Mammary epithelial cell (primary cell): ENCODE measurements at regions of chr9 and their contacts with region 1.

Region 1: GRCh38 chr9:134624827-134625181 is 16.8 kb upstream of the COL5A1 start:
- DNase-seq: peak; percentile 77
- H3K4me3 ChIP-seq: no peak overlapping the region
- H3K27ac ChIP-seq: no peak overlapping the region
- H3K4me1 ChIP-seq: peaks cover 6% of the 10 kb centered on the region
- H3K27me3 ChIP-seq: no peaks in the 10 kb centered on the region
- CTCF ChIP-seq: no peak

Region 2: GRCh38 chr9:134564431-134565170 is 60.2 kb before region 1 on chr9:
- CTCF ChIA-PET with region 1: no interaction called
- dilution Hi-C with region 1: loop called (anchors 10 kb)
- in situ Hi-C with region 1: no loop called
- intact Hi-C with region 1: no loop called
- DNase-seq: no peak
- H3K4me3 ChIP-seq: no peak overlapping the region
- H3K27ac ChIP-seq: no peak overlapping the region
- H3K4me1 ChIP-seq: no peaks in the 10 kb centered on the region
- H3K27me3 ChIP-seq: no peaks in the 10 kb centered on the region
- CTCF ChIP-seq: no peak